ENCODE measurements at regions of chr4 and their contacts with region 1.

Region 1: DNA sequence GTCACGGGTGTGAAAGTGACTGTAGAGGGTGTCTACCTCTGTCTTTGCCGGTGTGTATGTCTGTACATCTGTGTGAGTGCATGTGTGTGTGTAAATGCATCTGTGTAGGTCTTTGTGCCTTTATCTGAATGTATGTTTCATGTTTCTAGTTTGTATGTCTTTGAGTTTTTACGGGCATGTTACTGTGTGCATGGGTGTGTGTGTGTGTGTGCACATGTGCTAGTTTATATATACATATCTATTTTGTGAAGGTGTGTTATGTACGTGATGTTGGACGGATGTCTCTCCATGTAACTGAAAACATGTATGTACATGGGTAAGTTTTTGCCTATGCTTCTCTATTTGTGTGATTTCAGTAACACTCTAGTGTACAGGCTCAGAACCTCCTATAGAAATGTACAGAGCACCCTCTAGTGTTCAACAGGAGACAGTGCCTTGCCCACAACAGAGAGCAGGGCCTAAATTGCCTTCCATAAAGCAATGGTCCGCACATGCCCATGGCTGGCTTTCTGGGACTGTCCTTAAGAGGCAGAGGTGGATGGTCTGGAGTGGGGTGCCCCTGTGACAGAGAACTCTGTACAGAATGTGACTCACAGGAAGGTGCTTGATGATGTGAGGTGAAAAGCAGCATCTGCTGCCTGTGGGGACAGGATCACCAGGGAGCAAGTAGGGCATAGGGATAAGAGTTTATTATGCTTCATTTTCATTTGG is 343.5 kb downstream of the RAPGEF2 start:
- DNase-seq: peak; percentile 31 to 69 (median 48)
- ATAC-seq: peak; percentile 99
- H3K4me3 ChIP-seq: no peak overlapping the region
- H3K27ac ChIP-seq: no peak overlapping the region
- H3K4me1 ChIP-seq: no peaks in the 10 kb centered on the region
- H3K27me3 ChIP-seq: no peaks in the 10 kb centered on the region
- CTCF ChIP-seq: peak; percentile 70 to 85 (median 85)
- EP300 ChIP-seq: no peak
- POLR2A ChIP-seq: no peak
- RAD21 ChIP-seq: peak; percentile 84 to 89

Region 2: DNA sequence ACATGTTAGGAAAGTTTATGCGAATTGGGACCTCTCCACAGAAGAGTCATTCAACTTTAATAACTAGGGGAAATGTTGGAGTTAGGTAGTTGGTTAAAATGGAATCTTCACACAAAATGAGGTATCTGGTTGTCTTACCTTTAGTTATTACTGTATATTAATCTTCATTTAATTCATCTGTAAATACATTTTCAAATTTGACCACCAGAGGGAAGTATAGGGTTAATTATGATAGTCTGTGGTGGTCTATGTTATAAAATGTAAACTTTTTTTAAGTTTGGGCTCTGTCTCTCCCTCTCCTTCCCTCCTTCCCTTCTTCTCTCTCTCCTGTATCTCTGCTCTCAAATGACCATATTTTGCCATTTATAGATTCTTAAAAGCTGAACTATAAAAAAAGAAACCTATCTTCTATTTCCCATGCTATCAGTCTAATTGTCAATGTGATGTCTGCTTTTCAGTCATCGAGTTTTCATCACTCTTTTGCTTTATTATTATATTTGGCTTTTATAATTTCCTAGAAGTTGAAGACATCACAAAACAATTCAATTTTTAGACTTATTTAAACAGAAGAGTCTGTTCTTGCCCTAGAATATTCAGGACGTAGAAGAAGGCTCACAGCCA is 1186.4 kb before region 1 on chr4:
- CTCF ChIA-PET with region 1: no interaction called
- POLR2A ChIA-PET with region 1: no interaction called
- in situ Hi-C with region 1: loop called (anchors 25 kb)
- intact Hi-C with region 1: loop called (anchors 2 kb)
- DNase-seq: peak in 1 of 4 experiments; percentile 34
- ATAC-seq: peak; percentile 77
- H3K4me3 ChIP-seq: no peak overlapping the region
- H3K27ac ChIP-seq: no peak overlapping the region
- H3K4me1 ChIP-seq: no peaks in the 10 kb centered on the region
- H3K27me3 ChIP-seq: no peaks in the 10 kb centered on the region
- CTCF ChIP-seq: peak in 2 of 3 experiments; percentile 20 to 61; a peak in 3 of 6 replicates
- EP300 ChIP-seq: no peak
- POLR2A ChIP-seq: no peak
- RAD21 ChIP-seq: peak; percentile 73 to 79

Region 3: GRCh38 chr4:158729716-158730559 is 716.5 kb before region 1 on chr4:
- CTCF ChIA-PET with region 1: no interaction called
- POLR2A ChIA-PET with region 1: no interaction called
- in situ Hi-C with region 1: loop called (anchors 25 kb)
- intact Hi-C with region 1: loop called (anchors 1 kb)
- DNase-seq: peak in 2 of 4 experiments; percentile 59 to 70
- ATAC-seq: peak; percentile 97
- H3K4me3 ChIP-seq: no peak overlapping the region
- H3K27ac ChIP-seq: no peak overlapping the region
- H3K4me1 ChIP-seq: no peaks in the 10 kb centered on the region; a peak in 2 of 5 replicates
- H3K27me3 ChIP-seq: no peaks in the 10 kb centered on the region
- CTCF ChIP-seq: peak; percentile 83 to 88 (median 86)
- EP300 ChIP-seq: no peak
- POLR2A ChIP-seq: no peak
- RAD21 ChIP-seq: peak; percentile 79 to 85

Region 4: DNA sequence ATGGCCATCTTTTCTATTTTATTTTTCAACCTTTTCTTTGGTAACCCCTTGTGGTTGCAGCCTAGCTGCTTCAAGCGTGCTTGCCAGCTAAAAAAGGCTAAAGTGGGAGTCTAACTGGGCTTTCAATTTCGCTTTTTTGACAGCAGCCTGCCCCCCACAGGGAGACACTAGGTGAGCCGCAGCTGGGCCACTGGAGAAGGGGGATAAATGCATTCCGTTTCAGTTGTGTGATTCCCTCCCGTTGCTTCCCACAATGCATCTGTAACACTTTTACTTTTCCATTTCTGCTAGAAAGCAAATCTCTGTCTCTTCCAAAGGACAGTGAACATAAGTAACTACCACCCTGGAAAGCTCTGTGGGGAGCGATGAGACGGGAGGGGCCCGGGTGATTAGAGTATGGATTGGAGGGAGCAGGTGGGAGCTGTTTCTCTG is 429.8 kb before region 1 on chr4:
- CTCF ChIA-PET with region 1: no interaction called
- POLR2A ChIA-PET with region 1: no interaction called
- in situ Hi-C with region 1: no loop called
- intact Hi-C with region 1: loop called (anchors 1 kb)
- DNase-seq: peak; percentile 46 to 70 (median 58)
- ATAC-seq: peak; percentile 86
- H3K4me3 ChIP-seq: no peak overlapping the region
- H3K27ac ChIP-seq: no peak overlapping the region
- H3K4me1 ChIP-seq: peaks cover 3 to 13% of the 10 kb centered on the region in 2 experiments; a peak in 3 of 5 replicates
- H3K27me3 ChIP-seq: no peaks in the 10 kb centered on the region
- CTCF ChIP-seq: peak; percentile 52 to 63 (median 59)
- EP300 ChIP-seq: no peak
- POLR2A ChIP-seq: no peak
- RAD21 ChIP-seq: peak; percentile 30 to 69; a peak in 3 of 4 replicates

Region 5: GRCh38 chr4:159175085-159175988 is 271.1 kb before region 1 on chr4:
- CTCF ChIA-PET with region 1: no interaction called
- POLR2A ChIA-PET with region 1: no interaction called
- in situ Hi-C with region 1: no loop called
- intact Hi-C with region 1: loop called (anchors 5 kb)
- DNase-seq: peak; percentile 49 to 88 (median 63)
- ATAC-seq: peak; percentile 93
- H3K4me3 ChIP-seq: no peak overlapping the region
- H3K27ac ChIP-seq: no peak overlapping the region; the same call in 2 of the 3 replicates
- H3K4me1 ChIP-seq: peaks cover 3 to 23% of the 10 kb centered on the region in 2 experiments; a peak in 3 of 5 replicates
- H3K27me3 ChIP-seq: no peaks in the 10 kb centered on the region
- CTCF ChIP-seq: peak; percentile 78 to 86 (median 80)
- EP300 ChIP-seq: peak; percentile 24
- POLR2A ChIP-seq: no peak
- RAD21 ChIP-seq: peak; percentile 87 to 88

Region 6: DNA sequence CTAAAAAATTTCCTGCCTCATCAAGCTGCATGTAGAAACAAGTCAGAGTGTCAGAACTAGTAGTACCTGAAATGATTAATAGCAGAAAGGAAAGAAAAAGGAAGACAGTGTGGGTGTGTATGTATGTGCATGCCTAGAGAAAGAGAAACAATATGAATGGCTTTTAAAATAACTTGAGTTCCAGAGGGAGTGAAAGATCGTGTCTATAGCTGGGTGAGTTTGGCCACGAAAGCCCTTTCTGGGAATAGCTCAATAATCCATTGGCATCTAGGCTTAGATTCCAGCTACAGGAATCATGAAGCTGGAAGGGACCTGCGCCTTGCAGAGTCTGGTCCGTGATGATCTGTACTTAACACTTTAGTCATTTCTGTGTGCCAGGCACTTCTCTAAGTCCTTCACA is 147.9 kb before region 1 on chr4:
- CTCF ChIA-PET with region 1: no interaction called
- POLR2A ChIA-PET with region 1: no interaction called
- in situ Hi-C with region 1: no loop called
- intact Hi-C with region 1: loop called (anchors 5 kb)
- DNase-seq: no peak
- ATAC-seq: no peak
- H3K4me3 ChIP-seq: no peak overlapping the region
- H3K27ac ChIP-seq: no peak overlapping the region
- H3K4me1 ChIP-seq: no peaks in the 10 kb centered on the region
- H3K27me3 ChIP-seq: no peaks in the 10 kb centered on the region
- CTCF ChIP-seq: no peak
- EP300 ChIP-seq: no peak
- POLR2A ChIP-seq: no peak
- RAD21 ChIP-seq: no peak

Region 7: GRCh38 chr4:159787901-159788300 is 341.5 kb after region 1 on chr4:
- CTCF ChIA-PET with region 1: no interaction called
- POLR2A ChIA-PET with region 1: no interaction called
- in situ Hi-C with region 1: no loop called
- intact Hi-C with region 1: no loop called
- DNase-seq: no peak
- ATAC-seq: no peak
- H3K4me3 ChIP-seq: no peak overlapping the region
- H3K27ac ChIP-seq: no peak overlapping the region
- H3K4me1 ChIP-seq: no peaks in the 10 kb centered on the region
- H3K27me3 ChIP-seq: no peaks in the 10 kb centered on the region
- CTCF ChIP-seq: no peak
- EP300 ChIP-seq: no peak
- POLR2A ChIP-seq: no peak
- RAD21 ChIP-seq: no peak